Activated T-helper 1 cell treated with anti-CD3 and anti-CD28 coated beads, Interleukin-12 subunit alpha, Interleukin-12 subunit beta, Interleukin-2, Interleukin-4 antibody, amounts not matched to agents 30 ng/mL and 10 ng/mL and 1 ng/mL, durations not matched to agents 14 hours and 24 hours and 36 hours (primary cell): ENCODE measurements at regions of chr16 and their contacts with region 1.

Region 1: GRCh38 chr16:58684354-58685083 is at the start of gene SLC38A7:
- DNase-seq: peak; percentile 72
- H3K4me3 Mint-ChIP-seq: peak within 1 kb of the TSS; percentile 90
- H3K27ac Mint-ChIP-seq: peak within 1 kb of the TSS; percentile 77
- H3K4me1 Mint-ChIP-seq: peaks cover 14% of the 10 kb centered on the region
- H3K27me3 Mint-ChIP-seq: peaks cover 7% of the 10 kb centered on the region
- total RNA-seq, gene SLC38A7: 9.3 and 11.8 TPM in 2 replicates

Region 2: DNA sequence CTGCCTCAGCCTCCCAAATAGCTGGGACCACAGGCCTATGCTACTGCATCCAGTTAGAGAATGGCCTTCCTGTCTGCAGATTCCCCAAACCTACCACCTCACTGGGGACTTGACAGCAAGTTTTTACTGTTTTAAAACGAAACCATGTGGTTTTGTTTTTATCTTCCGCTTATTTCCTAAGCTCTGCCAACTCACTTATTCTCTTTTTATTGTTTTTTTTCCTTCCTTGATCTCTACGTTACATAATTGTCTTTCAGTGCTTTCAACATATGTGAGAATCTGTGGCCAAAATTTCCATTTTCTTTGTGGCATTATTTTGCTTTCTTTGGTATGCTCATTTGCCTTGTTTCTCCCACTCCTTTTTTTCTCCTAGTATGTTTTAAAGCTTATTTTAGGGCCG is 14.6 kb after region 1 on chr16:
- intact Hi-C with region 1: loop called (anchors 1 kb)
- DNase-seq: no peak
- H3K4me3 Mint-ChIP-seq: no peak overlapping the region
- H3K27ac Mint-ChIP-seq: peak overlapping the region; percentile 62
- H3K4me1 Mint-ChIP-seq: peaks cover 6% of the 10 kb centered on the region
- H3K27me3 Mint-ChIP-seq: peaks cover 2% of the 10 kb centered on the region